GM12878 (cell line): ENCODE measurements at regions of chr10 and their contacts with region 1.

Region 1: DNA sequence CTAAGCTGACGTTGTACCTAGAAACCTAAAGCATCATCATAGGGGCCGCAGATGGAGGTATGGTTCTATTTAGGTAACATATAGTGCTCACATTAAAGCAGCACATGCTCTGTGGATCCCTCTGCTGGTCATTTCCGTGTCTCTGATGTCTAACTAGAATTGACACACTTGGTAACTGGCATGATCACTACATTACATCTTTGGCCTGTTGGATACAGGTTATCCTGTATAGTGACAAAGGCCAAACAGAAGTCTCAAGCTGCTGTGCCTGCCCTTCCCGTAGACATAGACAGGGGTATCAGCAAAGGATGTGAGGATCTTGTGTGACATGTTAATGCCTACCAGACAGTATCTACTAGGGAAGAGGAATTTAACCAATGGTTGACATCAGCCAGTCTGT is 51.2 kb downstream of the KIF5B start:
- DNase-seq: peak; percentile 16
- ATAC-seq: peak; percentile 90
- H3K4me3 ChIP-seq: no peak overlapping the region
- H3K27ac ChIP-seq: no peak overlapping the region
- H3K4me1 ChIP-seq: no peaks in the 10 kb centered on the region
- H3K27me3 ChIP-seq: no peaks in the 10 kb centered on the region
- CTCF ChIP-seq: peak; percentile 63 to 65 (median 63)
- EP300 ChIP-seq: no peak
- POLR2A ChIP-seq: no peak; the same call in none of the 2 replicates
- RAD21 ChIP-seq: peak; percentile 61

Region 2: GRCh38 chr10:31836569-31837406 is 168.3 kb before region 1 on chr10:
- CTCF ChIA-PET with region 1: interaction called, 3 read pairs
- POLR2A ChIA-PET with region 1: no interaction called
- RAD21 ChIA-PET with region 1: interaction called, 4 read pairs
- SMC1A ChIA-PET with region 1: interaction called, 3 read pairs
- in situ Hi-C with region 1: no loop called
- intact Hi-C with region 1: loop called (anchors 2 kb)
- DNase-seq: no peak
- ATAC-seq: peak; percentile 79
- H3K4me3 ChIP-seq: no peak overlapping the region
- H3K27ac ChIP-seq: no peak overlapping the region
- H3K4me1 ChIP-seq: no peaks in the 10 kb centered on the region
- H3K27me3 ChIP-seq: no peaks in the 10 kb centered on the region
- CTCF ChIP-seq: peak; percentile 62 to 78 (median 63); a peak in 5 of 6 replicates
- EP300 ChIP-seq: no peak
- POLR2A ChIP-seq: no peak
- RAD21 ChIP-seq: peak; percentile 80

Region 3: GRCh38 chr10:31855033-31855432 is 150.0 kb before region 1 on chr10:
- CTCF ChIA-PET with region 1: interaction called, 112 read pairs
- POLR2A ChIA-PET with region 1: no interaction called
- RAD21 ChIA-PET with region 1: interaction called, 4 read pairs
- SMC1A ChIA-PET with region 1: no interaction called
- in situ Hi-C with region 1: loop called (anchors 5 kb)
- intact Hi-C with region 1: no loop called
- DNase-seq: no peak
- ATAC-seq: no peak
- H3K4me3 ChIP-seq: no peak overlapping the region
- H3K27ac ChIP-seq: no peak overlapping the region
- H3K4me1 ChIP-seq: no peaks in the 10 kb centered on the region
- H3K27me3 ChIP-seq: no peaks in the 10 kb centered on the region
- CTCF ChIP-seq: no peak
- EP300 ChIP-seq: no peak
- POLR2A ChIP-seq: no peak
- RAD21 ChIP-seq: no peak

Region 4: DNA sequence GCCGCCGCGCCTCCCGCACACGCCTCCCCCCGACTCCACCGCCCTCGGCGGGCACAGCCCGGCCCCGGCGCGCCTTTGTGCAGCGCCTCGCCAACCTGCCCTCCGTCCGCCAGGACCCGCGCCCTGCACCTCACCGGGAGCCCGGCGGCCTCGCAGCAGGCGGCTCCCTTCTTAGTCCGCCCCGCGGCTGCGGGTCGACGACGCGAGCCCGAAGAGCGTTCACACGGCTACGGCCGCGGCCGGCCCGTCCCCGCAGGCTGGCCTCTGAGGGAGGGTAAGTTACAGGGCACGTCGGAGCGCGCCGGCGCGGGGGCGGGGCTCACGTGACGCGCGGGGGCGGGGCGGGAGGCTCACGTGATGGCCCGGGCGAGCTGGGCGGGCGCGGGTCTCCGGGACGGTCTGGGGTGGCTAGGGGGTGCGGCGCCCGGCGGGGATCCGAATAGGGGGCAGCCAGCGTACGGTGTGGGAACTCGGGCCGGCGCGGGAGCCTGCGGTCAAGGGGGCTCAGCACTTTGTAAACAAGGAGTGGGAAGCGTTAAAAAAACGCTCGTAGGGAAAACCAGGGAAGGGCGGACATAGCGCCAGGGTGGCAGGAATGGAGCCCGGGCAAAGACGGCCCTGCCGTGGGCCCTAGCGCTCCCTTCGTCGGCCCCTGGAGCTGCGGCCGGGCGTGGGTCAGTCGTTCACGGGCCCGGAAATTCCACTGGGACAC is 76.3 kb before region 1 on chr10 and contains the start of gene ARHGAP12:
- CTCF ChIA-PET with region 1: interaction called, 3 read pairs
- POLR2A ChIA-PET with region 1: no interaction called
- RAD21 ChIA-PET with region 1: no interaction called
- SMC1A ChIA-PET with region 1: interaction called, 5 read pairs
- in situ Hi-C with region 1: no loop called
- intact Hi-C with region 1: loop called (anchors 5 kb)
- DNase-seq: no peak
- ATAC-seq: peak; percentile 84
- H3K4me3 ChIP-seq: peak within 1 kb of the TSS; percentile 70
- H3K27ac ChIP-seq: peak within 1 kb of the TSS; percentile 53
- H3K4me1 ChIP-seq: peaks cover 14% of the 10 kb centered on the region
- H3K27me3 ChIP-seq: no peaks in the 10 kb centered on the region
- CTCF ChIP-seq: no peak
- EP300 ChIP-seq: no peak
- POLR2A ChIP-seq: peak; percentile 89
- RAD21 ChIP-seq: no peak
- polyA plus RNA-seq, gene ARHGAP12: 5.4 to 7.7 TPM

Region 5: DNA sequence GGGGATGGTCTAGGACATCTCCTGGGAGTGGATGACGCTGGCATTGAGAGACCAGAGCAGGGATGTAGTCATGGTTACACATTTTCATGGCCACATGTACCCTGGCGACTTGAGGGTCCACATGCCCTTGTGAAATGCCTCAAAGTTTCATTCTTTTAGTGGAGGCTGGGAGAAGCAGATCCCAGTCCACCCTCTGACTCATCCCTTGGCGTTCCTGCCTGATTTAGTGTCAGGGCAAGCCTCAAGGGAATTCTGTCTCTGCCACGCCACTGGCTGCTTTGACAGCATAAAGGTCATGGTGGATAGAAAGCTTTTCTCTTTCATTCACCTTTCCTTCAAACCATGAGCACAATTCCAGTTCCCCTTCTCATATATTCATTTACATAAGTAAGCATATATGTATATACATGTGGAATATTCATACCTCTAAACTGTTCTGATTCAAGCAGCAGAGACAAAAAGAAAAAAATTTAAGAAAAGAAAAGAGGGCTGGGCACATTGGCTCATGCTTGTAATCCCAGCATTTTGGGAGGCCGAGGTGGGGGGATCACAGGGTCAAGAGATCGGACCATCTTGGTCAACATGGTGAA is 72.9 kb after region 1 on chr10:
- CTCF ChIA-PET with region 1: no interaction called
- POLR2A ChIA-PET with region 1: no interaction called
- RAD21 ChIA-PET with region 1: no interaction called
- SMC1A ChIA-PET with region 1: no interaction called
- in situ Hi-C with region 1: no loop called
- intact Hi-C with region 1: no loop called
- DNase-seq: no peak
- ATAC-seq: no peak
- H3K4me3 ChIP-seq: no peak overlapping the region
- H3K27ac ChIP-seq: no peak overlapping the region
- H3K4me1 ChIP-seq: no peaks in the 10 kb centered on the region
- H3K27me3 ChIP-seq: no peaks in the 10 kb centered on the region
- CTCF ChIP-seq: no peak
- EP300 ChIP-seq: no peak
- POLR2A ChIP-seq: no peak
- RAD21 ChIP-seq: no peak